K562 (cell line): ENCODE measurements at regions of chr15 and their contacts with region 1.

Region 1: DNA sequence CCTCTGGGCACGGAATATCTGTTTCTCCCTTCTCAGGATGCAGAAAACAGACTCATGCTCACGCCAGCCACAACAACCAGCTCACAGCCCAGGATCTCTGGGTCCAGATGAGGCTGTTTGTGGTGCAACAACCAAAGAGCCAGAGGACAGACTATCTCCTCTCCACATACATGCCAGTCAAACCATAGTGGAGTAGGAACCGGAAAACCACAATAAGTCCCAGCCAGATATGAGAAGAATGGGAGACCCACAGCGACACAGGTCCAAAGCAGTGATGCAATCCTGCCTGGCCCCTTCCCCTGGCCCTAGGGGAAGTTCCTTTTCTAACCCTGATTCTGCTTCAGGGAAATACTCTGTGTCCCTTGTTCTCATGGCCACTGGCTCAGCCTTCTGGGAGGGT is 27.6 kb downstream of the MEX3B start:
- DNase-seq: peak in 3 of 4 experiments; percentile 16 to 71 (median 65)
- ATAC-seq: peak; percentile 87
- H3K4me3 ChIP-seq: no peak overlapping the region
- H3K27ac ChIP-seq: peak overlapping the region; percentile 6; the same call in 1 of the 3 replicates
- H3K4me1 ChIP-seq: peaks cover 9 to 16% of the 10 kb centered on the region in 2 experiments; a peak in 4 of 5 replicates
- H3K27me3 ChIP-seq: no peaks in the 10 kb centered on the region; a peak in 1 of 5 replicates
- CTCF ChIP-seq: no peak
- EP300 ChIP-seq: peak; percentile 79
- POLR2A ChIP-seq: no peak
- RAD21 ChIP-seq: peak in 1 of 2 experiments; percentile 28; a peak in 2 of 4 replicates

Region 2: GRCh38 chr15:81947548-81947947 is 70.7 kb before region 1 on chr15:
- CTCF ChIA-PET with region 1: no interaction called
- POLR2A ChIA-PET with region 1: no interaction called
- in situ Hi-C with region 1: no loop called
- intact Hi-C with region 1: loop called (anchors 5 kb)
- DNase-seq: peak in 3 of 4 experiments; percentile 29 to 66 (median 36)
- ATAC-seq: peak; percentile 4; the same call in 1 of the 3 replicates
- H3K4me3 ChIP-seq: no peak overlapping the region
- H3K27ac ChIP-seq: peak overlapping the region; percentile 55
- H3K4me1 ChIP-seq: peaks cover 46 to 69% of the 10 kb centered on the region in 2 experiments
- H3K27me3 ChIP-seq: no peaks in the 10 kb centered on the region
- CTCF ChIP-seq: no peak
- EP300 ChIP-seq: peak; percentile 53; the same call in 1 of the 2 replicates
- POLR2A ChIP-seq: no peak
- RAD21 ChIP-seq: no peak

Region 3: GRCh38 chr15:82262422-82263026 is 244.3 kb after region 1 on chr15 and contains the starts of genes EFL1 and SAXO2:
- CTCF ChIA-PET with region 1: no interaction called
- POLR2A ChIA-PET with region 1: no interaction called
- in situ Hi-C with region 1: no loop called
- intact Hi-C with region 1: no loop called
- DNase-seq: peak; percentile 88 to 92 (median 91)
- ATAC-seq: peak; percentile 95
- H3K4me3 ChIP-seq: peak within 1 kb of the TSS; percentile 71
- H3K27ac ChIP-seq: peak within 1 kb of the TSS; percentile 73
- H3K4me1 ChIP-seq: peaks cover 15 to 24% of the 10 kb centered on the region in 2 experiments; a peak in 4 of 5 replicates
- H3K27me3 ChIP-seq: no peaks in the 10 kb centered on the region
- CTCF ChIP-seq: no peak
- EP300 ChIP-seq: no peak
- POLR2A ChIP-seq: peak; percentile 75
- RAD21 ChIP-seq: no peak
- polyA plus RNA-seq, gene EFL1: 4.8 to 16.9 TPM
- polyA plus RNA-seq, gene SAXO2: 6.0 to 9.5 TPM